ENCODE measurements at regions of chr10 and their contacts with region 1.

Region 1: GRCh38 chr10:18214691-18215563 is 74.7 kb downstream of the CACNB2 start:
- DNase-seq: no peak
- H3K4me3 ChIP-seq: no peak overlapping the region
- H3K27ac ChIP-seq: no peak overlapping the region
- H3K4me1 ChIP-seq: no peaks in the 10 kb centered on the region
- H3K27me3 ChIP-seq: no peaks in the 10 kb centered on the region
- CTCF ChIP-seq: peak; percentile 19 to 61 (median 61)
- POLR2A ChIP-seq: no peak

Region 2: GRCh38 chr10:17851611-17852010 is 363.3 kb before region 1 on chr10:
- intact Hi-C with region 1: loop called (anchors 10 kb)
- DNase-seq: no peak
- H3K4me3 ChIP-seq: no peak overlapping the region
- H3K27ac ChIP-seq: no peak overlapping the region
- H3K4me1 ChIP-seq: no peaks in the 10 kb centered on the region
- H3K27me3 ChIP-seq: no peaks in the 10 kb centered on the region
- CTCF ChIP-seq: no peak
- POLR2A ChIP-seq: no peak

Region 3: GRCh38 chr10:18290651-18291313 is 75.9 kb after region 1 on chr10:
- intact Hi-C with region 1: no loop called
- DNase-seq: no peak
- H3K4me3 ChIP-seq: no peak overlapping the region
- H3K27ac ChIP-seq: no peak overlapping the region
- H3K4me1 ChIP-seq: no peaks in the 10 kb centered on the region
- H3K27me3 ChIP-seq: no peaks in the 10 kb centered on the region
- CTCF ChIP-seq: no peak
- POLR2A ChIP-seq: no peak

Region 4: DNA sequence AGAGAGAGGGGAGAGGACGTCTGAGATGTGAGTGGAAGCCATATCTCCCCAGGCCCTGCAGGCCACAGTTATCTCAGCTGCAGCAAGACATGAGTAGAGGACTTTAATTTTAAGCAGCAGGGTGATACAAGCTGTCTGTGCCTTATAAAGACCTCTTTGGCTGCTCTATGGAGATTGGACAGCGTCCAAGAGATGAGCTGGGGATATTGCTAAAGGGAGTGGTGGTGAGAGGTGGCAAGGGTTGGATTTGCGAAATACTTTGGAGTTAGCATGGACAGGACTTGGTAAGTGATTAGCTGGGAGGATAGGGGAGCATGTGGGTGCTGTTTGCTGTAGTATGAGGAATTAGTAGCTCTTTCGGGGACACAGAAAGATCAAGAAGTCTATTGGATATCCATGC is 117.1 kb after region 1 on chr10:
- intact Hi-C with region 1: no loop called
- DNase-seq: no peak
- H3K4me3 ChIP-seq: no peak overlapping the region
- H3K27ac ChIP-seq: no peak overlapping the region
- H3K4me1 ChIP-seq: no peaks in the 10 kb centered on the region
- H3K27me3 ChIP-seq: no peaks in the 10 kb centered on the region
- CTCF ChIP-seq: no peak
- POLR2A ChIP-seq: no peak

Measured in vagina (tissue), 2 donors.